CD8-positive, alpha-beta T cell (primary cell): ENCODE measurements at regions of chr9 and their contacts with region 1.

Region 1: DNA sequence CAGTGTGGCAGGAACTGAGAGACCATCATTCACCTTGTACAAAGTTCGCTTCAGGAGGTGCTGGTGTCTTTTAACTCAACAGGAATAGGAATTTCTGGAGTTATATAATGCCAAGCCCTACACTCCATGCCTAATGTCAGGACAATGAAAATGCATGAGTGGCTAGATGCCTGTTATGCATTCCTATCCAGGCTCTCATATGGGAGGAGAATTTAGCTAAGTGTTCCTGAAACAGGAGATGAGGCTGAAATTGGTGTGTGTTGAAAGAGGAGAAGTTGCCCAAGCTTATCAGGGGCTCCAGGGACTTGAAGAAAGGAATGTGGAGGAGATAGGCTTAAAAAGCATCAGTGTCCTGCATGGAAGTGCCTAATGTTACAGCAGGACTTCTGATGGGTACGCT is 26.8 kb upstream of the PRUNE2 start:
- DNase-seq: no peak
- ATAC-seq: no peak
- H3K4me3 ChIP-seq: no peak overlapping the region
- H3K4me3 Mint-ChIP-seq: no peak overlapping the region
- H3K27ac ChIP-seq: no peak overlapping the region
- H3K27ac Mint-ChIP-seq: no peak overlapping the region
- H3K4me1 ChIP-seq: no peaks in the 10 kb centered on the region
- H3K4me1 Mint-ChIP-seq: no peaks in the 10 kb centered on the region
- H3K27me3 ChIP-seq: peaks cover 0 to 3% of the 10 kb centered on the region in 2 experiments
- H3K27me3 Mint-ChIP-seq: peaks cover 3% of the 10 kb centered on the region
- CTCF ChIP-seq: no peak

Region 2: DNA sequence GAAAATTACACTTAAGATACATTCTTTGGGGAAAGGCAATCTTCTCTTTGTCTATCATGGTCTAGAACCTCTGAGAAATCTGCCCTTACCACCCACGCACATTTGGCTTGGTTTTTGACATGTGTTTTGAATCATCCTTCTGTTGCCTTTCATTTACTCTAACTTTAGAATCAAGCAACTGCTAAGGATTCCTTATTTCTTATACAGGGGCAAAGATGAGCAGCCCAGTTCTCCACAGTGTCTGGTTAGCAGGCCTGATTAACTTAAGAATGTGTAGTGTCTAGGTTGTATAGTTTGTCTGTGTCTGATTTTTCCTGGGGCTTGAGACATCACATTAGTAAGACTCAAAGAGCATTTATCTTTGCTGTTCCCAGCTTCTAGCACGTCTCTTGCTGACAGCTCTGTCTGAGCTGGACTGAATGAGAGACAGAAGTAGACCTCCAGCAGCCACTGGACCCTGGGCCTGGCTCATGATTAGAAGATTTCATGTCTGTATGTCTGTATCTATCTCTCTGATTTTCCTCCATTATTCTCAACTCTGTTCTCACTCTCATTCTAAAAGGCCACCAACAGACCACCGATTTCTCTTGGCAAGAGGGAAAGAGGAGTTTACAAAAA is 200.3 kb before region 1 on chr9:
- CTCF ChIA-PET with region 1: no interaction called
- POLR2A ChIA-PET with region 1: no interaction called
- intact Hi-C with region 1: no loop called
- DNase-seq: no peak
- ATAC-seq: no peak
- H3K4me3 ChIP-seq: no peak overlapping the region
- H3K4me3 Mint-ChIP-seq: no peak overlapping the region
- H3K27ac ChIP-seq: no peak overlapping the region
- H3K27ac Mint-ChIP-seq: no peak overlapping the region
- H3K4me1 ChIP-seq: no peaks in the 10 kb centered on the region
- H3K4me1 Mint-ChIP-seq: no peaks in the 10 kb centered on the region
- H3K27me3 ChIP-seq: peaks cover 0 to 3% of the 10 kb centered on the region in 2 experiments
- H3K27me3 Mint-ChIP-seq: peaks cover 4% of the 10 kb centered on the region
- CTCF ChIP-seq: no peak

Region 3: GRCh38 chr9:76873056-76873792 is 59.5 kb before region 1 on chr9:
- CTCF ChIA-PET with region 1: no interaction called
- POLR2A ChIA-PET with region 1: no interaction called
- intact Hi-C with region 1: loop called in 1 of 2 experiments (anchors 10 kb)
- DNase-seq: no peak
- ATAC-seq: no peak
- H3K4me3 ChIP-seq: no peak overlapping the region
- H3K4me3 Mint-ChIP-seq: no peak overlapping the region
- H3K27ac ChIP-seq: no peak overlapping the region
- H3K27ac Mint-ChIP-seq: no peak overlapping the region
- H3K4me1 ChIP-seq: no peaks in the 10 kb centered on the region
- H3K4me1 Mint-ChIP-seq: no peaks in the 10 kb centered on the region
- H3K27me3 ChIP-seq: no peaks in the 10 kb centered on the region
- H3K27me3 Mint-ChIP-seq: peaks cover 10% of the 10 kb centered on the region
- CTCF ChIP-seq: no peak